Activated T-helper 1 cell treated with anti-CD3 and anti-CD28 coated beads, Interleukin-12 subunit alpha, Interleukin-12 subunit beta, Interleukin-2, Interleukin-4 antibody, amounts not matched to agents 30 ng/mL and 10 ng/mL and 1 ng/mL, durations not matched to agents 14 hours and 24 hours and 36 hours (primary cell): ENCODE measurements at regions of chr5 and their contacts with region 1.

Region 1: GRCh38 chr5:35672995-35673394 is 55.3 kb downstream of the SPEF2 start:
- DNase-seq: peak; percentile 29
- H3K4me3 Mint-ChIP-seq: peak overlapping the region; percentile 10
- H3K27ac Mint-ChIP-seq: peak overlapping the region; percentile 59
- H3K4me1 Mint-ChIP-seq: peaks cover 65% of the 10 kb centered on the region
- H3K27me3 Mint-ChIP-seq: no peaks in the 10 kb centered on the region

Region 2: GRCh38 chr5:35651002-35651756 is 21.8 kb before region 1 on chr5:
- intact Hi-C with region 1: loop called (anchors 1 kb)
- DNase-seq: peak; percentile 50
- H3K4me3 Mint-ChIP-seq: no peak overlapping the region
- H3K27ac Mint-ChIP-seq: no peak overlapping the region
- H3K4me1 Mint-ChIP-seq: peaks cover 5% of the 10 kb centered on the region
- H3K27me3 Mint-ChIP-seq: no peaks in the 10 kb centered on the region

Region 3: GRCh38 chr5:35736280-35736679 is 63.3 kb after region 1 on chr5:
- intact Hi-C with region 1: loop called (anchors 1 kb)
- DNase-seq: no peak
- H3K4me3 Mint-ChIP-seq: no peak overlapping the region
- H3K27ac Mint-ChIP-seq: peak overlapping the region; percentile 69
- H3K4me1 Mint-ChIP-seq: peaks cover 24% of the 10 kb centered on the region
- H3K27me3 Mint-ChIP-seq: no peaks in the 10 kb centered on the region

Region 4: GRCh38 chr5:35919191-35919590 is 246.2 kb after region 1 on chr5:
- intact Hi-C with region 1: loop called (anchors 2 kb)
- DNase-seq: no peak
- H3K4me3 Mint-ChIP-seq: no peak overlapping the region
- H3K27ac Mint-ChIP-seq: peak overlapping the region; percentile 81
- H3K4me1 Mint-ChIP-seq: peaks cover 35% of the 10 kb centered on the region
- H3K27me3 Mint-ChIP-seq: peaks cover 3% of the 10 kb centered on the region